ENCODE measurements at regions of chr18 and their contacts with region 1.

Region 1: DNA sequence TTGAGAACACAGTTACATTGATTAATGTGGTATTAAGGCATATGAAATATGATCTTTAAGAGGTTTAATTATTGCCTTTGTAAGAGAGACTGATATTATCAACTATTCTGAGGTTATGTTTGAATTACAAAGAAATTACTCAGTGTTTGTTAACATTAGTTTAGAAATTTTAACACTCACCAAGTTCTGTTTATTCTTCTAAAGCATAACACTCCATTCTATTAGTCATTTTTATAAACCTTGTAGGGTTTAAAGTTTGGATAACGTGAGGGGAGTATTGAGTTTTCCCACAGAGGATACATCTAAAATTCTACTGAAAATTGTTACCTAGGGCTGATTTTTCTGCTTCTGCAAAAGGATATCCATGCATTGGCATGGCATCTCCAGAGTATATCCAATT is 7.7 kb downstream of the CCDC178 start:
- DNase-seq: no peak
- ATAC-seq: no peak
- H3K4me3 ChIP-seq: no peak overlapping the region
- H3K27ac ChIP-seq: no peak overlapping the region
- H3K4me1 ChIP-seq: no peaks in the 10 kb centered on the region
- H3K27me3 ChIP-seq: no peaks in the 10 kb centered on the region
- CTCF ChIP-seq: no peak
- EP300 ChIP-seq: no peak
- POLR2A ChIP-seq: no peak
- RAD21 ChIP-seq: no peak

Region 2: GRCh38 chr18:31634331-31634713 is 1798.5 kb before region 1 on chr18:
- CTCF ChIA-PET with region 1: no interaction called
- POLR2A ChIA-PET with region 1: no interaction called
- RAD21 ChIA-PET with region 1: no interaction called
- SMC1A ChIA-PET with region 1: no interaction called
- in situ Hi-C with region 1: no loop called
- intact Hi-C with region 1: no loop called
- DNase-seq: peak; percentile 85
- ATAC-seq: peak; percentile 98
- H3K4me3 ChIP-seq: no peak overlapping the region
- H3K27ac ChIP-seq: peak overlapping the region; percentile 70
- H3K4me1 ChIP-seq: peaks cover 35% of the 10 kb centered on the region
- H3K27me3 ChIP-seq: no peaks in the 10 kb centered on the region
- CTCF ChIP-seq: no peak
- EP300 ChIP-seq: peak in 1 of 2 experiments; percentile 51; a peak in 1 of 4 replicates
- POLR2A ChIP-seq: no peak
- RAD21 ChIP-seq: peak; percentile 22; the same call in 1 of the 2 replicates

Region 3: DNA sequence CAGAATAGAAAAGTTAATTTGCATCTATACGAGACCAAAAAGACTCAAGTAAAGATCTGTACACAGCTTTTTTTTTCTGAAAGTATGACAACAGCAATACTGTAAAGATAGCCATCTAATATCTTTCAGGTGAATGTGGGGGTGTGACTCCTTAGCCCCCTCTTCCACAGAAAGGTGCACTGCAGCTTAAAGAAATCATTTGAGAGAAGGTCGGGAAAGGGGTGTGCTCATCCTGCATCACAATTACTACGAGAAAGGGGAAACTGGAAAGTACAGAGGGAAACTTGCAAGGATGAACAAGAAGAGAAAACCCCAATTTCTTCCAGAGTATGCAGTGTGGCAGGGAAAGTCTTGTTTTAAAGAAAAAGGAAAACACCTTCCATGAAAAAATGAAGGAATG is 247.9 kb before region 1 on chr18:
- CTCF ChIA-PET with region 1: no interaction called
- POLR2A ChIA-PET with region 1: no interaction called
- RAD21 ChIA-PET with region 1: no interaction called
- SMC1A ChIA-PET with region 1: no interaction called
- in situ Hi-C with region 1: no loop called
- intact Hi-C with region 1: no loop called
- DNase-seq: no peak
- ATAC-seq: no peak
- H3K4me3 ChIP-seq: no peak overlapping the region
- H3K27ac ChIP-seq: no peak overlapping the region
- H3K4me1 ChIP-seq: no peaks in the 10 kb centered on the region
- H3K27me3 ChIP-seq: 0 out of 4 replicates have a peak, but pooled peaks cover 0 to 2% of the 10 kb centered on the region in 2 experiments
- CTCF ChIP-seq: no peak
- EP300 ChIP-seq: no peak
- POLR2A ChIP-seq: no peak
- RAD21 ChIP-seq: no peak

Region 4: DNA sequence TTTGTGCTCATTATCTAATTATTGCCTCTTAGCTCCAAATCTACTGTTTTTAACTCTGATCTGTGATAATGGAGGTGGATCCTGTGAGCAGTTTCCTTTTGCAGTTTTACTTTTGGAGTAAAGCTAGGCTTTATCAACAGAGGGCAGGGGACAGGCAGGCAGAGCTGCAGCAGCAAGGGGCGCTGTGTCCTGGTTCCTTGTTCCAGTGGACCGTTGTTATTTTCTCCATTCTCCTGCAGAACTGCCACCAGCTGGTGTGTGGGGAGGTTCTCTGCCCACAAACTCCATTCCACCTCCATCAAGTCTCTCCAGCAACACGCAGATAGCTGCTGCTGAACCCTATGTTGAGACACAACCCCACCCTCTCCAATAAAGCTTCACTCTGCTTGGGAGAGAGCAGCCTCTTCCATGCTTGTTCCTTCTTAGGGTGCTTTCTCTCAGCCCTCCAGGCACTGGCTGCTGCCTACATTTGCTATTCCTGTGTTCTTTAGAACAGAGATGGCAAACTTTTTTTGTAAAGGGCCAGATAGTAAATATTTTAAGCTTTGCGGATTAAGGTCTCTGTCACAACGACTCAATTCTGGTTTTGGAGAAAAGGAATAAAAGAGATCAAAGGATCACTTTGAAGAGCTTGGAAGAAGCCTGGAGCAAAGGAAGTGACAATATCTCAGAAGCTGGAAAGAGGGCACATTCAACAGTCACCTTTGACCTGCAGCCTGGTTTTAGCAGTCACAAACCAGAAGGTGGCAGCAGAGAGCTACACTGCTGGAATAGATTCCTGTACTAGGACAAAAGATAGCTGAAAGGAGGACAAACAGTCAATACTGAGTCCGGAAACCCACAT is 201.2 kb before region 1 on chr18:
- CTCF ChIA-PET with region 1: no interaction called
- POLR2A ChIA-PET with region 1: no interaction called
- RAD21 ChIA-PET with region 1: no interaction called
- SMC1A ChIA-PET with region 1: no interaction called
- in situ Hi-C with region 1: no loop called
- intact Hi-C with region 1: no loop called
- DNase-seq: peak; percentile 17
- ATAC-seq: peak; percentile 92
- H3K4me3 ChIP-seq: no peak overlapping the region
- H3K27ac ChIP-seq: no peak overlapping the region
- H3K4me1 ChIP-seq: no peaks in the 10 kb centered on the region
- H3K27me3 ChIP-seq: no peaks in the 10 kb centered on the region
- CTCF ChIP-seq: peak; percentile 85 to 89 (median 88)
- EP300 ChIP-seq: no peak
- POLR2A ChIP-seq: no peak
- RAD21 ChIP-seq: peak; percentile 89

Region 5: GRCh38 chr18:33372442-33372841 is 60.4 kb before region 1 on chr18:
- CTCF ChIA-PET with region 1: no interaction called
- POLR2A ChIA-PET with region 1: no interaction called
- RAD21 ChIA-PET with region 1: no interaction called
- SMC1A ChIA-PET with region 1: no interaction called
- in situ Hi-C with region 1: no loop called
- intact Hi-C with region 1: loop called (anchors 10 kb)
- DNase-seq: no peak
- ATAC-seq: no peak
- H3K4me3 ChIP-seq: no peak overlapping the region
- H3K27ac ChIP-seq: no peak overlapping the region
- H3K4me1 ChIP-seq: no peaks in the 10 kb centered on the region
- H3K27me3 ChIP-seq: no peaks in the 10 kb centered on the region
- CTCF ChIP-seq: no peak
- EP300 ChIP-seq: no peak
- POLR2A ChIP-seq: no peak
- RAD21 ChIP-seq: no peak